Mammary epithelial cell (primary cell): ENCODE measurements at regions of chr22 and their contacts with region 1.

Region 1: DNA sequence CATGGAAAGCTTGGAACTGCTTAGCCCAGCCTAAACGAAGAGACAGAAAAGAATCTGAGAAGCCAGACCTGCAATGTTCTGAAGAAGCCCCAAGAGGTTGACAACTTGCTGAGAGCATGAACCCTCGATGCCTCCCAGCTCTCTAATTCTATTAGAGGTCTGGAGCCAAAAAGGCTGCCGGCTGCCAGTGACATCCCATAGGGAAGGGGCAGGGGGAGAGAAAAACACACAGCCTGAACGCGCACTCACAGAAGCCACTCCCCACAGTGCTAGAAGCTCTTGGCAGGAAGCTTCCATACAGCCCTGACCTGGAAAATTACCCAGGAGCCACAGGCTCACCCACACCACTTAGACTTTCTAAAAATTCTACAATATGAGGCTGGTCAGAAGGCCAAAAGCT is 18.3 kb downstream of the POLDIP3 start:
- DNase-seq: no peak
- H3K4me3 ChIP-seq: no peak overlapping the region
- H3K27ac ChIP-seq: no peak overlapping the region
- H3K4me1 ChIP-seq: no peaks in the 10 kb centered on the region
- H3K27me3 ChIP-seq: no peaks in the 10 kb centered on the region
- CTCF ChIP-seq: no peak

Region 2: GRCh38 chr22:42528258-42528948 is 67.9 kb before region 1 on chr22:
- CTCF ChIA-PET with region 1: no interaction called
- dilution Hi-C with region 1: loop called (anchors 5 kb)
- in situ Hi-C with region 1: no loop called
- intact Hi-C with region 1: no loop called
- DNase-seq: no peak
- H3K4me3 ChIP-seq: no peak overlapping the region
- H3K27ac ChIP-seq: no peak overlapping the region
- H3K4me1 ChIP-seq: no peaks in the 10 kb centered on the region
- H3K27me3 ChIP-seq: no peaks in the 10 kb centered on the region
- CTCF ChIP-seq: no peak

Region 3: GRCh38 chr22:42644422-42645340 is 48.3 kb after region 1 on chr22:
- CTCF ChIA-PET with region 1: no interaction called
- dilution Hi-C with region 1: no loop called
- in situ Hi-C with region 1: no loop called
- intact Hi-C with region 1: no loop called
- DNase-seq: no peak
- H3K4me3 ChIP-seq: no peak overlapping the region
- H3K27ac ChIP-seq: no peak overlapping the region
- H3K4me1 ChIP-seq: peaks cover 41% of the 10 kb centered on the region
- H3K27me3 ChIP-seq: no peaks in the 10 kb centered on the region
- CTCF ChIP-seq: no peak